ENCODE measurements at regions of chr6 and their contacts with region 1.

Region 1: GRCh38 chr6:21593412-21593926 is at the start of gene SOX4:
- DNase-seq: peak; percentile 93 to 97 (median 95)
- ATAC-seq: peak; percentile 85 to 87
- H3K4me3 ChIP-seq: peak within 1 kb of the TSS; percentile 70
- H3K27ac ChIP-seq: peak within 1 kb of the TSS; percentile 66
- H3K4me1 ChIP-seq: no peaks in the 10 kb centered on the region
- H3K27me3 ChIP-seq: no peaks in the 10 kb centered on the region
- total RNA-seq, gene SOX4: 4.8 to 8.7 (median 6.6) TPM

Region 2: DNA sequence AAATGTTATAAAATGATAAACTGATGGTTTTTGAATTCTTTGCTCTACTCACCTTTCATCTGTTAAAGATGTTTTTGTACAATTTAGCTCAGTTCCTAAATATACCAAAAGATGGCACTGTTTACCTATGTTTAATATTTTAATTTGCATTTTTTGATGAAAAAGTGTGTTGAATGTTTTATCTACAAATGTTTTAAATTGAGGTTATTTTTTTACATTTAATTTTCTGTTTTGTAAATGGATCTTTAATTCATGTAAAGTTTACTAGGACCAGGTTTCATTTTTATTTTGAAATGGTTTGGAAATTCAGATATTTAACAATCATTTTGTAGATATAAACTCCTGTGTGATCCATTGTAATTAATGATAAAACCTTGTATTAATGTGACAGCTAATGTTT is 1029.2 kb before region 1 on chr6:
- intact Hi-C with region 1: loop called (anchors 5 to 10 kb)
- DNase-seq: no peak
- ATAC-seq: no peak
- H3K4me3 ChIP-seq: no peak overlapping the region
- H3K27ac ChIP-seq: no peak overlapping the region
- H3K4me1 ChIP-seq: no peaks in the 10 kb centered on the region
- H3K27me3 ChIP-seq: no peaks in the 10 kb centered on the region

Region 3: DNA sequence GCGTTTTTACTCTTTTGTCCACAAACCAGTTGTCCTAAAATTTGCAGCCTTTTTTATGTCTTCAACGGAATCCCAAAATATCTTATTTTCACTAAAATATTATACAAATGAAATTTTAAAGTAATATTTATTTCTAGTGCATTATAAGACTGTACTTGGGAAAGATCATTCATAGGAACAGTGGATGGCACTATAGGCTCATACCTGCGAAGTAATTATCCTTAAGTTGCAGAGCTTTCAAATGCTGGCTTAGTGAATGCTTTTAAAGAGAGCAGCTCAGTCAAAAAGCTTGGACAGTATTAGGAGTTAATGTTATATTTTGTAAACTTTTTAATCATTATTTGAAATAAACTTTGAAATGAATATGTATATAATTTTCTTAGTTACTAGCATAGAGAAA is 804.3 kb before region 1 on chr6:
- intact Hi-C with region 1: loop called in 1 of 4 experiments (anchors 10 kb)
- DNase-seq: no peak
- ATAC-seq: no peak
- H3K4me3 ChIP-seq: no peak overlapping the region
- H3K27ac ChIP-seq: no peak overlapping the region
- H3K4me1 ChIP-seq: no peaks in the 10 kb centered on the region
- H3K27me3 ChIP-seq: no peaks in the 10 kb centered on the region

Region 4: GRCh38 chr6:20877008-20877937 is 716.2 kb before region 1 on chr6:
- intact Hi-C with region 1: loop called in 2 of 4 experiments (anchors 5 kb)
- DNase-seq: no peak
- ATAC-seq: peak; percentile 50 to 54
- H3K4me3 ChIP-seq: no peak overlapping the region
- H3K27ac ChIP-seq: no peak overlapping the region
- H3K4me1 ChIP-seq: peaks cover 2% of the 10 kb centered on the region
- H3K27me3 ChIP-seq: no peaks in the 10 kb centered on the region

Region 5: DNA sequence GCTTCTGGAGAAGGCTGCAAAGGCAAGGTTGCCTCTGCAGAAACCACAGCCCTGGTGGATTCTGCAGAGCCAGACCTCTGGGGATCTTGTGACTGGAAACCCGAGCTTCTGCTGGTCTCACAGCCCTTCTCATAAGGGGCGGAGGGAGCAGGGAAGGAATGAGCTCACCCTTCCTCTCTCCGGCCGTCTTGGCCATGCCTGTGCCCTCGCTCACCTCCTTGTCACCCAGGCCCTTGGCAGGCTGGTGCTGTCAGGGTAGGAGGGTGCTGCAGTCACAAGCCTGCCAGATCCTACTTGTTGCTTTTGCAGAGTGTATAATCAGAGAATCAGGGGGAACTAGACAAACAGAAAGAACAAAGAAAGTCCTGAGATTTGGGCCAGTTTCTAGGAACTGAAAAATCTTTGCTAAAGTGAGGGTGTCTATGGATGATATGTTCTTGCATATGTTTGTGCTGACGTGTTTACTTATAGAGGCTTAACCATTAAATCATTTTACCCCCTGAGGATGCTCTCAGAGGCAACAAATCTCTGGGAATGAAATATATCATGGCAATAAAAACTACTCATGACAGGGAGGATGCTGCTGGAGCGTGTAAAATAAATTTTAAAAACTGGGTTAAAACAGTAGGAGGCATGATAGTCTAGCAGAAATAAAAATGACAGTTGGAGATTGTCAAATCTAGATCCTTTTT is 244.8 kb before region 1 on chr6:
- intact Hi-C with region 1: loop called in 1 of 4 experiments (anchors 10 kb)
- DNase-seq: peak; percentile 30 to 60 (median 51)
- ATAC-seq: peak; percentile 71 to 85
- H3K4me3 ChIP-seq: no peak overlapping the region
- H3K27ac ChIP-seq: no peak overlapping the region
- H3K4me1 ChIP-seq: peaks cover 4% of the 10 kb centered on the region
- H3K27me3 ChIP-seq: no peaks in the 10 kb centered on the region

Region 6: DNA sequence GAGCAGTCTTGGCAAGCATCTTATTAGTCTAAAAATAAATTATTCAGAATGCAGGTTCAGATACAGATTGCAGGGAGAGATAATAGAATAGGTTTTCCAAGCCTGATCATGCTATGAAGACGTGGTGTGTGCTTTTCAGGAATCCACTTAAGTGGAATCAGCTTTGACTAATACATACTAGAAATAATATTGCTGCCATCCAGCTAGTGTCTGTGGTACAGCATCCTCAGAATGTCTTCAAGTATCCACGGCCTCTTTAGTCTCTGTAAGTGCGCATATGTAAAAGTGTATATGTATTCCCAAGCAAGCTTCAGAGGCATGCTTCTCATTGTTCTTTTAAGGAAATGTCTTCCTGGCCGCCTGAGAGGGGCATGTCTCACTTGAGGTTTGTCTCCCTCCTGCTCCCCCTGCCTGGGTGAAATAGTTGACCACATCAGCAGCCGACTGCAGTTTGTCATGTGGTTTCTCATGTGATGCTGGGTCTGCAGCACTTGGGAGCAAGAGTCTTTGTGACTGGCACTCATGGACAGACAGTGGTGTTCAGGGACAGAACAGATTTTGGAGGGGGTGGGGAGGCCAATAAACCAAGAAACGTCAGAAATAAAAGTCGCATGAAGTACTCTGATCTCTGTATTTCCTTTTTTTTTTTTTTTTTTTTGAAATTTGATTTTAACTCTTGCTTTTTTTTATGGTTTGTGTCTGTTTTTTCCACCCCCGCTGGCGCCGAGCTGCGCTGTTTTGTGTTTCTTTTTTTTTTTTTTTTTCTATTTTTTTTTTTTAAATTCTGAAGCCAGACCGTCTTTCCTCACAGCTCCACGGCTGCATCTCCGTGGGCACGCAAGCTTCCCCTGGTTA is 552.6 kb after region 1 on chr6:
- intact Hi-C with region 1: loop called in 2 of 4 experiments (anchors 10 kb)
- DNase-seq: peak in 1 of 3 donors; percentile 47
- ATAC-seq: peak; percentile 54
- H3K4me3 ChIP-seq: no peak overlapping the region
- H3K27ac ChIP-seq: no peak overlapping the region
- H3K4me1 ChIP-seq: peaks cover 13% of the 10 kb centered on the region
- H3K27me3 ChIP-seq: no peaks in the 10 kb centered on the region